Natural killer cell (primary cell): ENCODE measurements at regions of chr7 and their contacts with region 1.

Region 1: GRCh38 chr7:100132697-100133151 is 6.0 kb downstream of the MBLAC1 start:
- DNase-seq: peak; percentile 44 to 84
- ATAC-seq: peak; percentile 81 to 84 (median 83)
- H3K4me3 ChIP-seq: no peak overlapping the region
- H3K4me3 Mint-ChIP-seq: no peak overlapping the region
- H3K27ac ChIP-seq: no peak overlapping the region
- H3K27ac Mint-ChIP-seq: no peak overlapping the region
- H3K4me1 ChIP-seq: peaks cover 12% of the 10 kb centered on the region
- H3K4me1 Mint-ChIP-seq: peaks cover 9 to 20% of the 10 kb centered on the region in 2 donors
- H3K27me3 ChIP-seq: no peaks in the 10 kb centered on the region
- H3K27me3 Mint-ChIP-seq: peaks cover 0 to 7% of the 10 kb centered on the region in 2 donors
- CTCF ChIP-seq: peak; percentile 79

Region 2: GRCh38 chr7:99806839-99807478 is 325.8 kb before region 1 on chr7:
- intact Hi-C with region 1: no loop called
- DNase-seq: no peak
- ATAC-seq: no peak
- H3K4me3 ChIP-seq: no peak overlapping the region
- H3K4me3 Mint-ChIP-seq: no peak overlapping the region
- H3K27ac ChIP-seq: no peak overlapping the region
- H3K27ac Mint-ChIP-seq: no peak overlapping the region
- H3K4me1 ChIP-seq: no peaks in the 10 kb centered on the region
- H3K4me1 Mint-ChIP-seq: no peaks in the 10 kb centered on the region
- H3K27me3 ChIP-seq: peaks cover 4% of the 10 kb centered on the region
- H3K27me3 Mint-ChIP-seq: peaks cover 28 to 58% of the 10 kb centered on the region in 2 donors
- CTCF ChIP-seq: no peak

Region 3: GRCh38 chr7:99975782-99976521 is 156.8 kb before region 1 on chr7 and contains the start of gene AZGP1:
- intact Hi-C with region 1: loop called (anchors 2 kb)
- DNase-seq: no peak
- ATAC-seq: no peak
- H3K4me3 ChIP-seq: no peak within 1 kb of the TSS
- H3K4me3 Mint-ChIP-seq: no peak within 1 kb of the TSS
- H3K27ac ChIP-seq: no peak within 1 kb of the TSS
- H3K27ac Mint-ChIP-seq: peak within 1 kb of the TSS in 1 of 2 donors; percentile 62
- H3K4me1 ChIP-seq: peaks cover 3% of the 10 kb centered on the region
- H3K4me1 Mint-ChIP-seq: peaks cover 0 to 6% of the 10 kb centered on the region in 2 donors
- H3K27me3 ChIP-seq: no peaks in the 10 kb centered on the region
- H3K27me3 Mint-ChIP-seq: peaks cover 26 to 40% of the 10 kb centered on the region in 2 donors
- CTCF ChIP-seq: no peak
- total RNA-seq, gene AZGP1: not detected